CD8-positive, alpha-beta memory T cell (primary cell): ENCODE measurements at regions of chr1 and their contacts with region 1.

Region 1: DNA sequence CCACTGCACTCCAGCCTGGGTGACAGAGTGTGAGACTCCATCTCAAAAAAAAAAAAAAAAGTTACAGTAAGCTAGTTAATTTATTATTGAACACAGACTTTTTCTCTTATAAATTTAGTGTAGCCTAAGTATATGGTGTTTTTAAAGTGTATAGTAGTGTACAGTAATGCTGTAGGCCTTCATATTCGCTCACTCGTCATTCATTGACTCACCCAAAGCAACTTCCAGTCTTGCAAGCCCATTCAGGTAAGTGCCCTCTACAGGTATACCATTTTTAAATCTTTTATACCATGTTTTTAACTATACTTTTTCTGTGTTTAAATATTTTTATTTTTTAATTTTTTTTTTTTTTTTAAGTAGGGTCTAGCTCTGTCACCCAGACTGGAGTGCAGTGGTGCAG is 12.1 kb downstream of the POU2F1 start:
- DNase-seq: no peak
- H3K4me3 ChIP-seq: no peak overlapping the region
- H3K4me3 Mint-ChIP-seq: no peak overlapping the region
- H3K27ac ChIP-seq: no peak overlapping the region
- H3K27ac Mint-ChIP-seq: no peak overlapping the region
- H3K4me1 ChIP-seq: peaks cover 21% of the 10 kb centered on the region
- H3K4me1 Mint-ChIP-seq: peaks cover 34 to 74% (median 60%) of the 10 kb centered on the region in 3 donors
- H3K27me3 ChIP-seq: no peaks in the 10 kb centered on the region
- H3K27me3 Mint-ChIP-seq: no peaks in the 10 kb centered on the region

Region 2: DNA sequence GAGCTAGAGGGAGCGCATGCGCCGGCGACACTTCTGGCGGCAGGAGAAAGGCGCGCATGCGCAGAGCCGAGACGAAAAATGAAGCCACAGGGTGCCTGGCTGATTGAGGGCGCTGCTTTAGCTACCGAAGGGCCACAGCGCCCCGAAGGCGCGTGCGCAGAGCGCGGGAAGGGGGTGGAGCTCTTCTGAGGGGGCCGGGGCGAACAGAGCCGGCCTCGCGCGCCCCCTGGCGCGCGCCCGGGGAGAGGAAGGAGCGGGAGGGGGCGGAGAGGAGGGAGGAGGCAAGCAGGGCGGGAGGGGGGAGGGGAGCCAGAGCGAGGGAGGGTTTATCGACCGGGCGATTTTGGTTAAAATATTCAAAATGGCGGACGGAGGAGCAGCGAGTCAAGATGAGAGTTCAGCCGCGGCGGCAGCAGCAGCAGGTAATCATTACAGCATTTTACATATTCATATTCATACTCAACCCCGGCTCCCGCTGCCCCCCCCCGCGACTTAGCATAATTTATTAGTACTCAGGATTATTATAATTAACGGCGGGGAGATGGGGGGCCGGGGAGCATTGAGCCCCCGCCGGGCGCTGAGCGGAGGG is 12.2 kb before region 1 on chr1 and contains the start of gene POU2F1:
- CTCF ChIA-PET with region 1: interaction called, 20 read pairs
- POLR2A ChIA-PET with region 1: interaction called, 9 read pairs
- DNase-seq: peak; percentile 96 to 100 (median 98)
- H3K4me3 ChIP-seq: peak within 1 kb of the TSS; percentile 100
- H3K4me3 Mint-ChIP-seq: peak within 1 kb of the TSS; percentile 91 to 98 (median 92)
- H3K27ac ChIP-seq: peak within 1 kb of the TSS; percentile 88
- H3K27ac Mint-ChIP-seq: peak within 1 kb of the TSS; percentile 82 to 97 (median 92)
- H3K4me1 ChIP-seq: peaks cover 28% of the 10 kb centered on the region
- H3K4me1 Mint-ChIP-seq: peaks cover 27 to 48% (median 43%) of the 10 kb centered on the region in 3 donors
- H3K27me3 ChIP-seq: no peaks in the 10 kb centered on the region
- H3K27me3 Mint-ChIP-seq: peaks cover 0 to 5% of the 10 kb centered on the region in 2 donors
- total RNA-seq, gene POU2F1: 12.3 to 13.5 TPM

Region 3: GRCh38 chr1:167258858-167259257 is 26.1 kb after region 1 on chr1:
- CTCF ChIA-PET with region 1: no interaction called
- POLR2A ChIA-PET with region 1: no interaction called
- DNase-seq: no peak
- H3K4me3 ChIP-seq: no peak overlapping the region
- H3K4me3 Mint-ChIP-seq: no peak overlapping the region
- H3K27ac ChIP-seq: no peak overlapping the region
- H3K27ac Mint-ChIP-seq: no peak overlapping the region
- H3K4me1 ChIP-seq: peaks cover 25% of the 10 kb centered on the region
- H3K4me1 Mint-ChIP-seq: peaks cover 25 to 47% (median 40%) of the 10 kb centered on the region in 3 donors
- H3K27me3 ChIP-seq: no peaks in the 10 kb centered on the region
- H3K27me3 Mint-ChIP-seq: no peaks in the 10 kb centered on the region

Region 4: GRCh38 chr1:167297222-167298214 is 64.7 kb after region 1 on chr1:
- CTCF ChIA-PET with region 1: no interaction called
- POLR2A ChIA-PET with region 1: no interaction called
- DNase-seq: no peak
- H3K4me3 ChIP-seq: no peak overlapping the region
- H3K4me3 Mint-ChIP-seq: peak overlapping the region in 1 of 7 donors; percentile 74
- H3K27ac ChIP-seq: no peak overlapping the region
- H3K27ac Mint-ChIP-seq: peak overlapping the region in 2 of 8 donors; percentile 57 to 66
- H3K4me1 ChIP-seq: no peaks in the 10 kb centered on the region
- H3K4me1 Mint-ChIP-seq: peaks cover 21 to 30% (median 23%) of the 10 kb centered on the region in 3 donors
- H3K27me3 ChIP-seq: no peaks in the 10 kb centered on the region
- H3K27me3 Mint-ChIP-seq: no peaks in the 10 kb centered on the region